ENCODE measurements at regions of chr19 and their contacts with region 1.

Region 1: DNA sequence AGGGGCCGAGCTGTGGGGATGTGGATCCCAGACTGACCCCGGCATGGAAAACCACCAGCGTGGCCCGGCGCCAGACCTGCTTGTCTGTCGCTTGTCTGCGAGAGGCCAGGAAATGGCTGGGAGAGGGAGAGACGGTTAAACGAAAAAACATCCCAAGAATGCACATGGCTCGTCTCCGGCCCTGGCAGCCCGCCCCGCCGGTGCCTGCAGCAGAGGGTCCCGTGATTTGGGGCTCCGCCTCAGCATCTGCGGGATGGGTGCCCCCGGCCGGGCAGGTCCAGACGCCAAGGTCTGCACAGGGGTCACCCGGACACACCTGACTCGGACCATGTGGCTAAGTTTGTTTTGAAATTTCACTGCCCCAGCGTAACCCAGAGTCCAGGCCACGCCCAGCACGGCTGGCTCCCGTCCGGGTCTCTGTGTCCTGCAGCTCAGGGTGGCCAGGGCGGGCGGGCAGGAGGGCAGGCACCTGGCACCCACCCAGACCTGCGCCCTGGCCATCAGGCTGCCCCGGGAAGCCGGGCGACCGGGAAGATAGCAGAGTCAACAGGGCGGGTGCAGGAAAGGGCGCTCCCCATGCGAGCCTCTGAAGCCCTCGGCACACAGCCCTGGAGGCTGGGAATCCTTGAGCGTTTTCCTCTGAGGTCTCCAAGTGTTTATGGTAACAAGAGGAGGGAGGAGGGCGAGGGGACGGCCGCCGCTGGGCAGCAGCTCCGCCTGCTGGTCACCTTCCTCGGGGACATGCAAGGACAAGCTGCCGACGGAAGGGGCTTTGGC is 103.2 kb downstream of the GADD45B start:
- DNase-seq: peak; percentile 98
- H3K4me3 ChIP-seq: peak overlapping the region; percentile 54 to 68 (median 57)
- H3K27ac ChIP-seq: peak overlapping the region; percentile 89 to 94 (median 93)
- H3K4me1 ChIP-seq: peaks cover 41 to 57% (median 46%) of the 10 kb centered on the region in 4 donors
- H3K27me3 ChIP-seq: no peaks in the 10 kb centered on the region
- CTCF ChIP-seq: peak; percentile 90 to 97 (median 96)
- EP300 ChIP-seq: peak; percentile 87
- POLR2A ChIP-seq: no peak

Region 2: DNA sequence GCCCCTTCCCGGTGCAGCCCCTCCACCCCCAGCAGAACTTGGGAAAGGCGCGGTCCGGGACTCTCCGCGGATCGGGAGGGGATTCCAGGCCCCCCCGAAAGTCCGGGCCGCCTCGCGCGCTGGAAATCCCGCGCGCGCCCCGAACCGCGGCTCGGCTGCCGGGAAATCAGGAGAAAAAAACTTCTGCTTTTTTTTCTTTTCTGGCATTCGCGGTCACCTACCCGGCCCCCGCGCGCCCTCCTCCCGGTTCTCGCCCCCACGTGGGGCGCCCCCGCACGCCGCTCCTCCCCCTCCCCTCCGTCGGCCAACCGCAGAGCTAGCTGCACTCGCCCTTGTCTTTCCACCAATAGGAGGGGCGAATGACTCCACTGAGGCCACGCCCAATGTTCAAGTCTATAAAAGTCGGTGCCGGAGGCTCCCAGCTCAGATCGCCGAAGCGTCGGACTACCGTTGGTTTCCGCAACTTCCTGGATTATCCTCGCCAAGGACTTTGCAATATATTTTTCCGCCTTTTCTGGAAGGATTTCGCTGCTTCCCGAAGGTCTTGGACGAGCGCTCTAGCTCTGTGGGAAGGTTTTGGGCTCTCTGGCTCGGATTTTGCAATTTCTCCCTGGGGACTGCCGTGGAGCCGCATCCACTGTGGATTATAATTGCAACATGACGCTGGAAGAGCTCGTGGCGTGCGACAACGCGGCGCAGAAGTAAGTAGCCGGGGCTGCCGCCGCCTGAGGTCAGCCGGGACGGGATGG is 103.2 kb before region 1 on chr19 and contains the start of gene GADD45B:
- intact Hi-C with region 1: loop called (anchors 1 kb)
- DNase-seq: peak; percentile 100
- H3K4me3 ChIP-seq: peak within 1 kb of the TSS; percentile 63 to 98 (median 91)
- H3K27ac ChIP-seq: peak within 1 kb of the TSS; percentile 90 to 96 (median 93)
- H3K4me1 ChIP-seq: peaks cover 30 to 43% (median 42%) of the 10 kb centered on the region in 4 donors
- H3K27me3 ChIP-seq: no peaks in the 10 kb centered on the region
- CTCF ChIP-seq: no peak
- EP300 ChIP-seq: peak; percentile 89
- POLR2A ChIP-seq: peak; percentile 100
- total RNA-seq, gene GADD45B: 56.5 to 793 (median 90.5) TPM

Region 3: GRCh38 chr19:2524838-2525723 is 54.0 kb before region 1 on chr19:
- intact Hi-C with region 1: no loop called
- DNase-seq: no peak
- H3K4me3 ChIP-seq: peak overlapping the region in 3 of 4 donors; percentile 29 to 32 (median 31)
- H3K27ac ChIP-seq: peak overlapping the region in 1 of 4 donors; percentile 11
- H3K4me1 ChIP-seq: peaks cover 16 to 31% (median 28%) of the 10 kb centered on the region in 4 donors
- H3K27me3 ChIP-seq: no peaks in the 10 kb centered on the region
- CTCF ChIP-seq: no peak
- EP300 ChIP-seq: no peak
- POLR2A ChIP-seq: no peak

Region 4: DNA sequence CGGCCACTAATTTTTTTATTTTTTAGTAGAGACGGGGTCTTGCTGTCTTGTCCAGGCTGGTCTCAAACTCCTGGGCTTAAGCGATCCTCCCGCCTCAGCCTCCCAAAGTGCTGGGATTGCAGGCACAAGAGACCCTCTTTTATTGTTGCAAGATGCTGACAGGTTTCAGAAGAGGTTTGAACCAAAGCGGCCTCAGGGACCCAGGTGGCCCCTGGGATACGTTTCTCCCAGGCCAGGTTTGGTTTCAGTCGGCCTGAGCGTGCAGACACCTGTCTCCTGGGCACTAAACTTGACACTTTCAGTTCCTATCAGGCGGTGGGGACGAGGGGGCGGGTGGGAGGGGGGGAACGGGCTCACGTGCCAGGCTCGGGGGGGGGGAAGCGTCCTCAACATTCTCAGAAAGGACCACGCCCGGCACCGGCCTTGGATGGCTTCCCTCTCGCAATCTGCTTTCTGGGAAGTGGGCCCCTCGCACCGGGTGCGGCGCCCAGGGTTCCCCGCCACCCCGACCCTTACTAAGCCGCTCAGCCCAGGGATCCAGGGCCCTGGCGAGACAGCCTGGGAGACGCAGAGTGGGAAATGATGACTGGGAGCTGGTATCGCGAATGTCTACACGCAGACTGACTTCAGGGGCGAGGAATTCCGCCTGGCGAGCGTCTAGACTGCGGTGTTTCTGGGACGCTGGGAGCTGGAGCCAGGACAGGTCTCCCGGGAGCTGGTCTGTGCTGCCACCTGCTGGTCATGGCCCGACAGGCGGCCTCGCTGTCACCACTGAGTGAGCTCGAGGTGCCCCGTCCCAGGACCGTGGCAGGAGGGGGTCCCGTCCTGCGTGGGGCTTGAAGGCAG is 31.8 kb after region 1 on chr19:
- intact Hi-C with region 1: loop called (anchors 5 kb)
- DNase-seq: peak; percentile 98
- H3K4me3 ChIP-seq: peak overlapping the region; percentile 50 to 59 (median 54)
- H3K27ac ChIP-seq: peak overlapping the region; percentile 89 to 92 (median 90)
- H3K4me1 ChIP-seq: peaks cover 17 to 39% (median 30%) of the 10 kb centered on the region in 4 donors
- H3K27me3 ChIP-seq: no peaks in the 10 kb centered on the region
- CTCF ChIP-seq: peak; percentile 98 to 99 (median 99)
- EP300 ChIP-seq: peak; percentile 86
- POLR2A ChIP-seq: no peak